MCF 10A (cell line): ENCODE measurements at regions of chr1 and their contacts with region 1.

Region 1: GRCh38 chr1:41241782-41242341 is at the start of gene SCMH1:
- DNase-seq: peak; percentile 32
- H3K4me3 Mint-ChIP-seq: peak within 1 kb of the TSS; percentile 73
- H3K27ac Mint-ChIP-seq: peak within 1 kb of the TSS; percentile 76
- H3K4me1 Mint-ChIP-seq: peaks cover 6% of the 10 kb centered on the region
- H3K27me3 Mint-ChIP-seq: no peaks in the 10 kb centered on the region
- CTCF ChIP-seq: no peak
- total RNA-seq, gene SCMH1: 51.4 and 55.9 TPM in 2 replicates

Region 2: DNA sequence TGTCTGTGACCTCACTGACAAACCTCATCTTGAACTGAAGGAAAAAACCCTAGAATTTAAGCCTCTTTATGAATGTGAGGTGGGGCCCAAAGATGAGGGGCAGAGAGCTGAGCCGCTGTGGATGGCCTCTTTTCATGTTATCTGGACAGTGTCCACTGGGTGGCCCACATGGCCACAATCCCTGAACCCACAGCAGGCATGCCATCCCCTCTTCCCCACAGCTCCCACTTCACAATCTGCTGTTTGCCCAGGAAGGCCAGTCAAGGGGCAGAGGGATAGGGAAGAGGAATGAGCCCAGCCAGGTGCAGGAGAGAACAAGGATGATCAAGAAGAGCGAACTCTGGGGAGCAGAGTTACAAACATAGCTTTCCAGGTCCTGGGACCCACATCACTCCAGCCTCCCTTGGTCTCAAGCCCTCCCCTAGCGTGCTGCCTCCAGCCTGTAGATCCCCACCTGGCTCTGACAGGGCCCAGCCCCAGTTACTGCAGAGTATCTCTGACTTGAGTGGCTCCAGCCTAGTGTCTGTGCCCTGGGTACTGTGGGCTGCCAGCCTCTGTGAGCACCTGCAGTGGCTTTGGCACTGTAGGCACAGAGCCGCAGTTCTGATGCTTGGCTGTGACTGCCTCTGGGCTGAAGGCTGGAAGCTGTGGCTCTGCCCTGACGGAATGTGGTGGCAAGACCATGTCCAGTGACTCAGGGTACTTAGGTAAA is 218.4 kb before region 1 on chr1:
- CTCF ChIA-PET with region 1: no interaction called
- POLR2A ChIA-PET with region 1: interaction called, 4 read pairs
- intact Hi-C with region 1: loop called (anchors 5 kb)
- DNase-seq: peak; percentile 26
- H3K4me3 Mint-ChIP-seq: no peak overlapping the region
- H3K27ac Mint-ChIP-seq: no peak overlapping the region
- H3K4me1 Mint-ChIP-seq: peaks cover 7% of the 10 kb centered on the region
- H3K27me3 Mint-ChIP-seq: no peaks in the 10 kb centered on the region
- CTCF ChIP-seq: peak; percentile 6

Region 3: DNA sequence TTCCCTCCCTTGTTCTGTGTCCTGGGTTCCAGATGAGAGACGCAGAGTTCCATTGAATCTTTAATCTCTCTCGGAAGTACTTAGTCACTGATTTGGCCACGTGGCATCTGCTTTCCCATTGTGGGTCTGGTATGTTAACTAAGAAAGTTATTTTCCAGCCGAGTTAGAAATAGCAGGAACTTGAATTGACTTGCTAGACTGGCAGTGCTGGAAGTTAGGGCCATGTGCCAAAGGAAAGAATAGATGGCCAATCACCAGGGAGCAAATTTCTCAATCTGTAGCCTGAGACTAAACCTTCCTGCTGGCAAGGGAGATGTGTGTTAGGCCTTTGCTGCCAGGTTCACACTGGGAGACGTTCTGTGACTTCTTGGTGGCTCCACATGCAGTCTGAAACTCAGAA is 196.1 kb before region 1 on chr1:
- CTCF ChIA-PET with region 1: interaction called, 3 read pairs
- POLR2A ChIA-PET with region 1: interaction called, 5 read pairs
- intact Hi-C with region 1: loop called (anchors 2 kb)
- DNase-seq: peak; percentile 95
- H3K4me3 Mint-ChIP-seq: peak overlapping the region; percentile 44
- H3K27ac Mint-ChIP-seq: peak overlapping the region; percentile 97
- H3K4me1 Mint-ChIP-seq: peaks cover 35% of the 10 kb centered on the region
- H3K27me3 Mint-ChIP-seq: no peaks in the 10 kb centered on the region
- CTCF ChIP-seq: no peak

Region 4: DNA sequence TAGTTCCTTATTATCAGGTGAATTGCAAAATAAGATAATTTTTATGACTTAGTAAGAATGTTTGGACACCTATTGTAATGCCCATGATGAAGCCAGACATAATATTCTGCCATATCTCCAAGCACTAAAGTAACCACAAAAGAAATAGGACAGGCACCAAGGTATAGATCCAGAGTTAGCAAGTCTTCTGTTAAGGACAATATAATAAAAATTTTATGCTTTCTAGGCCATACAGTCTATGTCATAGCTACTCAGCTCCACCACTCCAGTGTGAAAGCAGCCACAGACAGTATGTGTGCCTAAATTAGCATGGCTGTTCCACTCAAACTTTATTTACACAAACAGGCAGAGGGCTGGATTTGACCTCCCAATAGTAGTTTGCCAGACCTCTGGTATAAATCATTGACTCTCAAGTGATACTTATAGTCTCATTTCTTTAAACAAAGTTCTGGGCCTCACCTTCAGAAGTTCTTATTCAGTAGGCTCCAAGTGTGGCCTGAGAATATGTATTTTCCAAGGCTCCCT is 88.0 kb before region 1 on chr1:
- CTCF ChIA-PET with region 1: no interaction called
- POLR2A ChIA-PET with region 1: interaction called, 4 read pairs
- intact Hi-C with region 1: loop called (anchors 2 kb)
- DNase-seq: no peak
- H3K4me3 Mint-ChIP-seq: no peak overlapping the region
- H3K27ac Mint-ChIP-seq: peak overlapping the region; percentile 16
- H3K4me1 Mint-ChIP-seq: peaks cover 30% of the 10 kb centered on the region
- H3K27me3 Mint-ChIP-seq: no peaks in the 10 kb centered on the region
- CTCF ChIP-seq: no peak